ENCODE measurements at regions of chr10 and their contacts with region 1.

Region 1: GRCh38 chr10:20674926-20675325 is 222.2 kb downstream of the NEBL start:
- DNase-seq: peak in 1 of 5 donors; percentile 8
- ATAC-seq: peak in 2 of 4 donors; percentile 23 to 35
- H3K4me3 ChIP-seq: no peak overlapping the region
- H3K27ac ChIP-seq: peak overlapping the region in 6 of 12 donors; percentile 7 to 39 (median 32)
- H3K4me1 ChIP-seq: peaks cover 0 to 34% (median 11%) of the 10 kb centered on the region in 12 donors
- H3K27me3 ChIP-seq: no peaks in the 10 kb centered on the region
- CTCF ChIP-seq: no peak
- POLR2A ChIP-seq: no peak

Region 2: DNA sequence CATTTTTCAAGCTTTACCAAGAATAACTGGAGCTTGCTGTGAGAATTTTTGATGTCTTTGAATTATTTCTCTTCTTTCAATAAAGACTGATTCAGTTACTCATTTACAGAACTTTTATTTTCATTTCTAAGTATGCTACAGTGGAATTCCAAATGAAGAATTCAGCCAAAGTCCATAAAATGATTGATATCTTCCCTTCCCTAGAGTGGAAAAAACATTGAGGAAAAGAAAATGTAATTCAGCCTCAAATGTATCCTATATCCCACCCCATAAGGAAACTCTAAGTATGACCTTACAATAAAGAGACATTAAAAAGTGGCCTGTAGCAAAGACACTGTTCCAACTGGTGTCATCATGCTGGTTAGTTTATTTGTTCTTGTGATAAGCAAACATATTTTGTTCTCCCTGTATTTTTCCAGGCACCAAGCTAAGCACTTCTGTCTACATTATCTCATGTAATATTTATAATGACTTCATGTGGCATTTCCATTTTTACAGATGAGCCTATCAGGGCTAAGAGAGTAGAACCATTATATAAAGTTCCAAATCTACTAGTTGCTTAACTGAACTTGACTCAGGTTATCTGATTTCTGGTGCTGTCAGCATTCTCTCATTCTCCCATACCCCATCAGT is 228.2 kb before region 1 on chr10:
- intact Hi-C with region 1: no loop called
- DNase-seq: no peak
- ATAC-seq: no peak
- H3K4me3 ChIP-seq: no peak overlapping the region
- H3K27ac ChIP-seq: no peak overlapping the region
- H3K4me1 ChIP-seq: no peaks in the 10 kb centered on the region
- H3K27me3 ChIP-seq: no peaks in the 10 kb centered on the region
- CTCF ChIP-seq: no peak
- POLR2A ChIP-seq: no peak

Region 3: GRCh38 chr10:20608503-20608902 is 66.4 kb before region 1 on chr10:
- intact Hi-C with region 1: loop called in 1 of 10 experiments (anchors 5 kb)
- DNase-seq: no peak
- ATAC-seq: peak in 1 of 4 donors; percentile 34
- H3K4me3 ChIP-seq: no peak overlapping the region
- H3K27ac ChIP-seq: no peak overlapping the region
- H3K4me1 ChIP-seq: no peaks in the 10 kb centered on the region
- H3K27me3 ChIP-seq: no peaks in the 10 kb centered on the region
- CTCF ChIP-seq: no peak
- POLR2A ChIP-seq: no peak

Region 4: GRCh38 chr10:20622531-20623232 is 52.2 kb before region 1 on chr10:
- intact Hi-C with region 1: loop called in 2 of 10 experiments (anchors 5 kb)
- DNase-seq: no peak
- ATAC-seq: peak in 2 of 4 donors; percentile 39 to 40
- H3K4me3 ChIP-seq: no peak overlapping the region
- H3K27ac ChIP-seq: peak overlapping the region in 10 of 12 donors; percentile 9 to 69 (median 43)
- H3K4me1 ChIP-seq: peaks cover 0 to 19% (median 6%) of the 10 kb centered on the region in 12 donors
- H3K27me3 ChIP-seq: no peaks in the 10 kb centered on the region
- CTCF ChIP-seq: no peak
- POLR2A ChIP-seq: no peak

Region 5: GRCh38 chr10:20745556-20746375 is 70.8 kb after region 1 on chr10:
- intact Hi-C with region 1: no loop called
- DNase-seq: no peak
- ATAC-seq: no peak
- H3K4me3 ChIP-seq: no peak overlapping the region
- H3K27ac ChIP-seq: no peak overlapping the region
- H3K4me1 ChIP-seq: peaks cover 0 to 4% (median 0%) of the 10 kb centered on the region in 12 donors
- H3K27me3 ChIP-seq: no peaks in the 10 kb centered on the region
- CTCF ChIP-seq: no peak
- POLR2A ChIP-seq: no peak